Activated CD8-positive, alpha-beta memory T cell treated with anti-CD3 and anti-CD28 coated beads, Interleukin-2, amount 10 ng/mL, durations not matched to agents 7 days and 5 days (primary cell): ENCODE measurements at regions of chr7 and their contacts with region 1.

Region 1: DNA sequence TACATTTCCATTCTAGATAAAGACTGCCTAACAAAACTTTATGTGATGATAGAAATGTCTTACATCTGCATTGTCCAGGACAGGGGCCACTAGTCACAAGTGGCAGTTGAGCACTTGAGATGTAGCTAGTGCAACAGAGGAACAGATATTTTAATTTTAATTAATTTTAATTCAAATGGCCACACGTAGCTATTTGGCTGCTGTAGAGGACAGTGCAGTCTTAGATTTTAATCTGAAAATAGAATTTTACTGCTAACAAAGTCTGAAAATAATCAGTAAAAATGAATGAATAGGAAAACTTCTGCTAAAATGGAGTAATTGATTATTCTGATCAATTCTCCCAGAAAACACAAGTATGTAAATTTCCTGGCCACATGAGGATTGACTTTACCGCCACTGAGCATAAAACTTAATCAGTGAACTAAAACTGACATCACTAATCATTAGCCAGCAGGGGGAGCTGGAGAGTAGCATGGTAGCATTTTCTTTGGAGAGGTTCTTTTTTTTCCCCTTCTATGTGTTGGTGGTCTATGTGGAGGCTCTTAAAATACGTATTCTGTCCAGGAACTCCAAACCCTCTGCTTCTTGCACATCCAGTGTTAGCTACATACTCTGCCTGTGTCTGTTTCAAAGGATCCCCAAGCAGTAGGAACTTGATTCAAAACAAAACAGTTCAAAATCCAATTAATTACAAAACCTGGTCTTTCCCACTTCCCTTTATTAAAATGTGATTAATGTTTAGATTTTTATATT is 52.1 kb downstream of the TSPAN12 start:
- DNase-seq: peak; percentile 58
- ATAC-seq: peak; percentile 60
- H3K4me3 Mint-ChIP-seq: no peak overlapping the region
- H3K27ac Mint-ChIP-seq: no peak overlapping the region
- H3K4me1 Mint-ChIP-seq: no peaks in the 10 kb centered on the region
- H3K27me3 Mint-ChIP-seq: peaks cover 8% of the 10 kb centered on the region

Region 2: DNA sequence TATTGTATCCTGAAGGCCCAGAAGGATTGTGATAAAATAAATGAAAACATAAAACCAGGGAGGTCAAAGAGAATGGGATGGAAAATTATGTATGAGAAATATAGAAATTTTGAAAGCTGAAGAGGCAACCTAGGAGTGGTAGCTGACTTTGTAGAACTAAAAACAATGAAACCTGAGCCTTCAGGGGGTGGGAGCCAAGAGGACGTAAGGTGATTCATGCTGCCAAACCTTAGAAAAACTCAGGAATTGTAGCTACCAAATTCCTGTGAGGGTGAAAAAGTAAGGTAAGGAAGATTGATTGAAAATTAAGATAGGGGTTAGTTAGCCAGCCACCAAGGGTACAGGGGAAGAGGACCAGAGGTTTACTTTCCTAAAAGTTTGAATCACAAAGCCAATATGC is 319.6 kb before region 1 on chr7:
- CTCF ChIA-PET with region 1: no interaction called
- DNase-seq: no peak
- ATAC-seq: no peak
- H3K4me3 Mint-ChIP-seq: no peak overlapping the region
- H3K27ac Mint-ChIP-seq: no peak overlapping the region
- H3K4me1 Mint-ChIP-seq: no peaks in the 10 kb centered on the region
- H3K27me3 Mint-ChIP-seq: no peaks in the 10 kb centered on the region

Region 3: GRCh38 chr7:120770206-120770605 is 35.6 kb before region 1 on chr7:
- CTCF ChIA-PET with region 1: no interaction called
- DNase-seq: no peak
- ATAC-seq: no peak
- H3K4me3 Mint-ChIP-seq: no peak overlapping the region
- H3K27ac Mint-ChIP-seq: no peak overlapping the region
- H3K4me1 Mint-ChIP-seq: no peaks in the 10 kb centered on the region
- H3K27me3 Mint-ChIP-seq: peaks cover 4% of the 10 kb centered on the region

Region 4: GRCh38 chr7:120792091-120792860 is 13.5 kb before region 1 on chr7:
- CTCF ChIA-PET with region 1: interaction called, 21 read pairs
- DNase-seq: peak; percentile 67
- ATAC-seq: peak; percentile 76
- H3K4me3 Mint-ChIP-seq: no peak overlapping the region
- H3K27ac Mint-ChIP-seq: no peak overlapping the region
- H3K4me1 Mint-ChIP-seq: peaks cover 2% of the 10 kb centered on the region
- H3K27me3 Mint-ChIP-seq: peaks cover 13% of the 10 kb centered on the region

Region 5: DNA sequence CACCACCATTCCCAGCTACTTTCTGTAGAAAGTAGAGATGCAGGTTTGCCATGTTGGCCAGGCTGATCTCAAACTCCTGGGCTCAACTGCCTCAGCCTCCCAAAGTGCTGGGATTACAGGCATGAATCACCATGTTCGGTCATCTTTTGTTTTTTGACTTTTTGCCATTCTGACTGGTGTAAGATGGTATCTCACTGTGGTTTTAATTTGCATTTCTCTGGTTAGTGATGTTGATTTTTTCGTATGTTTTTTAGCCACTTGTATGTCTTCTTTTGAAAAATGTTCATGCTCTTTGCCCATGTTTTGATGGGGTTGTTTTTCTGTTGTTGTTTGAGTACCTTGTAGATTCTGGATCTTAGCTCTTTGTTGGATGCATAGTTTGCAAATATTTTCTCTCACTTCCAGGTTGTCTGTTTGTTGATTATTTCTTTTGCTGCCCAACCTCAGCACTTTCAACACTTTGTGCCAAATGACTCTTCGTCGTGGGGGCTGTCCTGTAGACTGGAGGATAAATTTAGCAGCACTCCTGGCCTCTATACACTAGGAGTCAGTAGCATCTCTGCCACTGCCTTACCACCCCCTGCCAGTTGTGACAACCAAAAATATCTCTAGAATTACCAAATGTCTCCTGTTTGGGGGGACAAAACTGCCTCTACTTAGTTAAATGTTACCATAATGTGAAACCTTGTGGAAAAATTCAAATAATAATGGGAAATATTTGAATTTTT is 176.2 kb after region 1 on chr7:
- CTCF ChIA-PET with region 1: no interaction called
- DNase-seq: peak; percentile 43
- ATAC-seq: peak; percentile 73
- H3K4me3 Mint-ChIP-seq: peak overlapping the region; percentile 1
- H3K27ac Mint-ChIP-seq: peak overlapping the region; percentile 63
- H3K4me1 Mint-ChIP-seq: peaks cover 24% of the 10 kb centered on the region
- H3K27me3 Mint-ChIP-seq: peaks cover 4% of the 10 kb centered on the region

Region 6: GRCh38 chr7:121081327-121081936 is 275.6 kb after region 1 on chr7:
- CTCF ChIA-PET with region 1: interaction called, 16 read pairs
- DNase-seq: no peak
- ATAC-seq: peak; percentile 81
- H3K4me3 Mint-ChIP-seq: no peak overlapping the region
- H3K27ac Mint-ChIP-seq: no peak overlapping the region
- H3K4me1 Mint-ChIP-seq: peaks cover 3% of the 10 kb centered on the region
- H3K27me3 Mint-ChIP-seq: peaks cover 30% of the 10 kb centered on the region

Region 7: DNA sequence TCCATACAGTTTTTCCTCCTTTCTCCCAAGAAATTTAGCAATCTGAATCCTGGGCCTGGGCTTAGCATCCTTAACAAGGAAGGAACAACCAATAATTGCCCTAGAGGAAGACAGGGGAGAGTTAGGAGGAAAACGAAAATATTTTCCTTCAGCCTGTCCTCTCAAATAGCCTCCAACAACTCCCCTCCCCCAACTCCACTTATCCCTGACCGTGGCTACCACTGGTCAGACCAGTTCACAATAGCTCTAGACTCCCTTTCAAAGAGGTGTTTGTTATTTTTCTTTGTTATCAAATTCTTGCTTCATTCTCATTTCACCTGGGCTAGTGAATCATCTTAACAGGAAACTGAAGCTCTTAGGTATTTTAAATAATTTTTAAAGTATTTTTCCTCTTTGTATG is 296.8 kb after region 1 on chr7:
- CTCF ChIA-PET with region 1: interaction called, 10 read pairs
- DNase-seq: no peak
- ATAC-seq: no peak
- H3K4me3 Mint-ChIP-seq: no peak overlapping the region
- H3K27ac Mint-ChIP-seq: no peak overlapping the region
- H3K4me1 Mint-ChIP-seq: no peaks in the 10 kb centered on the region
- H3K27me3 Mint-ChIP-seq: peaks cover 33% of the 10 kb centered on the region